Testis (tissue), 5 donors: ENCODE measurements at regions of chr19 and their contacts with region 1.

Region 1: DNA sequence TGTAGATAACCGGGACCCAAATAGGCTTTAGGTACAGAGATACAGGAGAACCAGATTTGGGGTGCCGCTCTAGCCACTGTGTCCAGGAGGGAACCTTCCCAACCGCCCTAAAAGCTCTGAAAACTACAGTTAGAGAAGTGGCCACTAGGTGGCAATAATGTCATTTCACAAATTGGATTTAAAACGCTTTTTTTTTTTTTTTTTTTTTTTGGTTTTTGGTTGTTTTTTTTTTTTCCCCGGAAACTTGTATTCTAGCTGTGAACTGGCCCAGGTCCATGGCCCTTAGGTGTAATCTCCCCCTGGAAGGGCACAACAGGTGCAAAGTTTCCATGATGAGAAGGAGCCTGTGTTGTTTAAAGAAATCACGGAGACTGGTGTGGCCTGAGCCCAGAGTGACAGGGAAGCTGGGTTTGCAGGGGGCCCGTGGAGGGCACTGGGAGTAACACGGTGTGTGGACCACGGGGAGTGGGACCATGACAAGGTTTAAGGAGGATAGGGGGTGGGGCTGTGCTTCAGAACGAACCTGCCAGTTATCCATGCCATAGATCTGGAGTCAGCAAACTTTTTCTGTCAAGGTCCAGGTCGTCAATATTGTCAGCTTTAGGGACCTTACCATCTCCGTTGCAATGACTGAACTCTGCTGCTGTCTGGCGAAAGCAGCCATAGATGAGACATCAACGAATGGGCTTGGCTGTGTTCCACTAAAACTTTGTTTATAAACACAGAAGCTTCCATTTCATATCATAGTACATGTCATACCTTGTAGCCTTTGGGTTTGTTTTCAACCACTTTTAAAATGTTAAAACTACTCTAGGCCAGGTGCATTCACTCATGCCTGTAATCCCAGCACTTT is 10.1 kb downstream of the OR1I1 start:
- DNase-seq: peak; percentile 66
- H3K4me3 ChIP-seq: no peak overlapping the region
- H3K27ac ChIP-seq: no peak overlapping the region
- H3K4me1 ChIP-seq: no peaks in the 10 kb centered on the region
- H3K27me3 ChIP-seq: no peaks in the 10 kb centered on the region
- CTCF ChIP-seq: peak; percentile 27 to 79 (median 54)
- POLR2A ChIP-seq: no peak

Region 2: DNA sequence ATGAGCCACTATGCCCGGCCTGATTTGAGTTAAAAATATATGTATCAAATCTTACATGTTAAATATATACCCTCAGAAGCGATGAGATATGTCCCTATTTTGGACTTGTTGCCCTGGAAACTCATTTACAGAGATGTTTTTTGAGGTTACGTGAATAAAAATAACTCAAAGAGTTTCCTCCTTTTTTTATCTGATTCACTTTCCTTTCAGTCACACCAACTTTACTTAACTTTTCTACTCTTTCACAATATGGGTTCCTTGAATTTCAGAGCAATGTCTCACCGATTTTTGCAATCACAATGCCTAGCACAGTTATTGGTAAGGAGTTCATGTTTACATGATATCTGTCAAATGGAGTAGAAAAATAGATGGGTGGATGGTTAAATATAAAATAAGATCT is 148.5 kb before region 1 on chr19:
- intact Hi-C with region 1: no loop called
- DNase-seq: no peak
- H3K4me3 ChIP-seq: no peak overlapping the region
- H3K27ac ChIP-seq: peak overlapping the region; percentile 25 to 26
- H3K4me1 ChIP-seq: peaks cover 6% of the 10 kb centered on the region
- H3K27me3 ChIP-seq: no peaks in the 10 kb centered on the region
- CTCF ChIP-seq: no peak
- POLR2A ChIP-seq: no peak

Region 3: DNA sequence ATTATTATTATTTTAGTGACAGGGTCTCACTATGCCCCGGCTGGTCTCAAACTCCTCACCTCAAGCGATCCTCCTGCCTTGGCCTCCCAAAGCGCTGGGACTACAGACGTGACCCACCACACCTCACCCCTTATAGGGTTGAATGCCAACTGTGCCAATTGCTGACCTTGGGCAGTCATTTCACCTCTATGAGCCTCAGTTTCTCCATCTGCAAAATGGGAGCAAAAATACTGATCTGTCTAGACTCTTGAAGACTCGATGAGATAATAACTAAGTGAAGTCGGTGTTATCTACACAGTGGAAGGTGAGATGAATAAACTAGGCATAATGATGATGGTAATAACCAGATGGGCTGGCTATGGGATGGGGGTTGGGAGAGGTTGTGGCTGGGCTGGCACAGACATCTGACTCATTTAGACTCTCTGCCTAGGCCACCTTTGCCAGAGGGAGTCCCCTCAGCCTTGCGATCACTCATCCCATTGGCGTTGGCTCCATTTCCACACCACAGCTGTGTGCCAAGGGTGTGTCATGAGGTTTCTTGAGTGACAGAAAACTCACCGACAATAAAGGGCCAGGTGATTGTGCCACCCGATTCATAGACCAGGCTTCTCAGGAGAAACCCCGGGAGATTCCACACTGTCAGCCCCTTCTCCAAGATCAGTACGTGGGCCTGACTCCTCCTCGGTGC is 43.1 kb before region 1 on chr19 and contains the start of gene CASP14:
- intact Hi-C with region 1: no loop called
- DNase-seq: no peak
- H3K4me3 ChIP-seq: no peak within 1 kb of the TSS
- H3K27ac ChIP-seq: no peak within 1 kb of the TSS
- H3K4me1 ChIP-seq: no peaks in the 10 kb centered on the region
- H3K27me3 ChIP-seq: no peaks in the 10 kb centered on the region
- CTCF ChIP-seq: no peak
- POLR2A ChIP-seq: no peak
- total RNA-seq, gene CASP14: 0.12 to 0.16 TPM

Region 4: DNA sequence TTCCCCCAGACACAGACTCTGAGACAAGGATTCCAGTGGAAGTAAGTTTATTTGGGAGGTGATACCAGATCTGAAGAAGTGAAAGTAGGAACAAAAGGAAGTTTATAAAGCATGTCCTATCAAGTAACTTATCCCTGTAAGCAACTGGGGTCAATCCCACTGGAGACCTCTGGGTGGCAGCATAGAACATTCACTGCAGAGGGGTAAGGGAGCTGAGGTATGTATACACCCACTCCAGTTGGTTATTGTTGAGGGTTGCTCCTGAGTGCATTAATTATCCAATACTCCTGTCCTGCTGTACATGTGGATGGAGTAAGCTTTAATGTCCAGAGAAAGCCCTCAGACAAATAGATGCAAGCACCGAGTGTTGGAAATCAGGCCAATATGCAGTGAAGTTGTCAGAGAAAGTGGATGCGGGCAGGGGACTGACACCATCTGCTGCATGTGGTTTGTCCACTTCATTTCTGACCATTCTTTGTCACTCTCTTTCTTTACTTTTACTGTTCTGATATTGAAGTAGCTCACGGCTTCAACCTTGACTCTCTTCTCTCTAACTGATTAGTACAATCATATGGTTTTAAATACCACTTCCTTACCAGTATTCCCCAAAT is 62.0 kb after region 1 on chr19:
- intact Hi-C with region 1: loop called (anchors 10 kb)
- DNase-seq: peak; percentile 56
- H3K4me3 ChIP-seq: no peak overlapping the region
- H3K27ac ChIP-seq: no peak overlapping the region
- H3K4me1 ChIP-seq: no peaks in the 10 kb centered on the region
- H3K27me3 ChIP-seq: no peaks in the 10 kb centered on the region
- CTCF ChIP-seq: peak in 2 of 3 experiments; percentile 48 to 55
- POLR2A ChIP-seq: no peak

Region 5: GRCh38 chr19:15555759-15556633 is 463.9 kb after region 1 on chr19:
- intact Hi-C with region 1: loop called (anchors 10 kb)
- DNase-seq: peak; percentile 96
- H3K4me3 ChIP-seq: peak overlapping the region; percentile 36 to 37
- H3K27ac ChIP-seq: no peak overlapping the region
- H3K4me1 ChIP-seq: peaks cover 12% of the 10 kb centered on the region
- H3K27me3 ChIP-seq: no peaks in the 10 kb centered on the region
- CTCF ChIP-seq: peak; percentile 20 to 89 (median 57)
- POLR2A ChIP-seq: no peak